ENCODE measurements at regions of chr18 and their contacts with region 1.

Region 1: DNA sequence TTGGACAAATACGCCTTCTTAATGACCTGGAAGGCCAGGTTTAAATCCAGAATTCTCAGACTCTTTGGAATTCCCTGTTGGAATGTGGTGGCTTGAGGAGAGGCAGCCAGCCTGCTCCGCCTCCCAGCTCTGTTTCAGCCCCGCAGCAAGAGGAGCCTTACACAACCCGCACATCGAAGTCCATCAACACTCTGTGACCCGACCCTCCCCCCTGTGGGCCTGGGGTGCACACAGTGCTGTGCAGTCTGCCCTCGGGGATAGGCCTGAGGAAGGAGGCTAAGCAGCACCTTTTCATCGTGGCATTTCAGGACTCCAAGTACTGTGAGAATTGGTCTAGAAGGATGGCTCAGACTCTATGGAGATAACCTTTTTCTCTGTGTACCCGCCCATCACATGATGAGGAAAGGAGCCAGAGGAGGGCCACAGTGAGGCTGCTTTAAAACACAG is 73.7 kb downstream of the GREB1L start:
- DNase-seq: no peak
- ATAC-seq: no peak

Region 2: GRCh38 chr18:21257386-21257785 is 58.4 kb before region 1 on chr18:
- intact Hi-C with region 1: loop called (anchors 10 kb)
- DNase-seq: no peak
- ATAC-seq: no peak